Activated T-helper 1 cell treated with anti-CD3 and anti-CD28 coated beads, Interleukin-12 subunit alpha, Interleukin-12 subunit beta, Interleukin-2, Interleukin-4 antibody, amounts not matched to agents 30 ng/mL and 10 ng/mL and 1 ng/mL, durations not matched to agents 14 hours and 24 hours and 36 hours (primary cell): ENCODE measurements at regions of chr19 and their contacts with region 1.

Region 1: DNA sequence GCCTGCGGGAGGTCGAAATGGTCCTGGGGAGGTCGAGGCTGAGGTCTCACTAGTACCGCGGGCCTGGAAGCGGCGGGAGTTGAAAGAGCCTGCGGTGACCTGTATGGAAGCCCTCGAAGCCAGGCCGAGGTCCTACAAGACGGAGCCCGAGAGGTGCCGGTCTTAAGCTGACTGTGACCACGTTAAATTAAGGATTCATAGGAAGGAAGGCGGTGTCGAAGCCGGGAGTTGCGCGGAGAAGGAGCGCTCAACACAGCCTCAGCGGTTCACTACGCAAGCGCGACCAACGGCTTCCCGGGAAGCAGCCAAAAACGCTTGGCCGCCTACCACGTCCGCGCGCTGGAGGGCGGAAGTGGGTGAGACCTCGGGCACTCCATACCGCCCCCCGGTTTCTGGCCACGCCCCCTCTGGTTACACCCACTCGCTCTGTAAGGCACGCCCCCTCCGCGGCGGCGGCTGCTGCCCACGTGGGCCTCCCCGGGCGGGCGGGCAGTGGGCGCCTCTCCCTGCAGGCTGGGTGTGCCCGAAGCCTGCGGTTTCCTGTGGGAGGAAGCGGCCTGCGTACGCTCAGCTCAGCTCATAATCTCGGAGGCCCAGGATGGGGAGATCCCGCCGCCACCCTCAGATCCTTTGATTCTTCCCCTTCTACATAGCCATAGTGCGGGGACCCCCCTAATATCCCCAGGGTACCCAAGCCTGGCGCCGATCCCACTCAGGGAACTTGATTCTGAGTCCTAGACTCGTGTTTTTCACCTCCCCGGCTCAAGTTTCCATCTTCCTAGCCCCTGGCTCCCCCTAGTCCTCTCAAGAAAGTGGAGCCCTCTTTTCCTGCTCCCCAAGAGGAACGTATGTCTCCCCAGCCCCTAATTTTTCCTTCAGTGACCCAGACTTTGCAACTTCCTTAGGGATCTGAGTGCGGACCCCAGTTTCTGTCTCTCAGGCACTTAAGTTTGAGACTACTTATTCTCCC is 3.4 kb upstream of the EMP3 start:
- DNase-seq: peak; percentile 100
- H3K4me3 Mint-ChIP-seq: peak overlapping the region; percentile 87
- H3K27ac Mint-ChIP-seq: peak overlapping the region; percentile 98
- H3K4me1 Mint-ChIP-seq: peaks cover 70% of the 10 kb centered on the region
- H3K27me3 Mint-ChIP-seq: peaks cover 2% of the 10 kb centered on the region

Region 2: DNA sequence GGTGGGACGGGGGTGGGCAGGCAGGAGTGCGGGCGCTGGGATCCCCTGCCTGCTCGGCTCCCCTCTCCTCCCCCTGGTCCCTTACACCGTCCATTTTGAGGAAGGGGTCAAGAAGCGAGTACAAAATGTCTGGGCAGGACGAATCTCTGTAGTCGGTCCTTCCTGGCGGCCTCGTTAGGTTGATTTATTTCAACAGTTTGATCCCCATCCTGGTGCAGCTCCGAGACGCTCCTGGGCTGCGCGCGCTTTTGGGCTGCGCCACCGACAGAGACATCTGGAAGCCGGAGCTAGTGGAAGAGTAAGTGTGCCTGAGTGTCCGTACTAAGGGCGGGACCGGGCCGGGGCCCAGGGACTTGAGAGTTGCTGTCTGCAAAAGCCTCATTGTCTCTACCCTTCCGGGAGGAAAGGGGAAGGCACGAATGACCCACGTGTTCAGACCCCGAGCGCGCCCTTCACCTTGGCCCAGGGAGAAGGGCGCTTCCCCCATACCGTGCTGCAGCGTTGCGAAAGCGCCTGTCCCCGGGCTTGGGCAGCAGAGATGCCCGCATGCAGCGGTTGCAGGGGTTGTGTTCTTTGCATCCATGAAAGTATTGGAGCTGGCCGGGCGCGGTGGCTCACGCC is 50.3 kb before region 1 on chr19:
- intact Hi-C with region 1: loop called (anchors 2 kb)
- DNase-seq: no peak
- H3K4me3 Mint-ChIP-seq: peak overlapping the region; percentile 81
- H3K27ac Mint-ChIP-seq: peak overlapping the region; percentile 23
- H3K4me1 Mint-ChIP-seq: peaks cover 13% of the 10 kb centered on the region
- H3K27me3 Mint-ChIP-seq: peaks cover 21% of the 10 kb centered on the region

Region 3: DNA sequence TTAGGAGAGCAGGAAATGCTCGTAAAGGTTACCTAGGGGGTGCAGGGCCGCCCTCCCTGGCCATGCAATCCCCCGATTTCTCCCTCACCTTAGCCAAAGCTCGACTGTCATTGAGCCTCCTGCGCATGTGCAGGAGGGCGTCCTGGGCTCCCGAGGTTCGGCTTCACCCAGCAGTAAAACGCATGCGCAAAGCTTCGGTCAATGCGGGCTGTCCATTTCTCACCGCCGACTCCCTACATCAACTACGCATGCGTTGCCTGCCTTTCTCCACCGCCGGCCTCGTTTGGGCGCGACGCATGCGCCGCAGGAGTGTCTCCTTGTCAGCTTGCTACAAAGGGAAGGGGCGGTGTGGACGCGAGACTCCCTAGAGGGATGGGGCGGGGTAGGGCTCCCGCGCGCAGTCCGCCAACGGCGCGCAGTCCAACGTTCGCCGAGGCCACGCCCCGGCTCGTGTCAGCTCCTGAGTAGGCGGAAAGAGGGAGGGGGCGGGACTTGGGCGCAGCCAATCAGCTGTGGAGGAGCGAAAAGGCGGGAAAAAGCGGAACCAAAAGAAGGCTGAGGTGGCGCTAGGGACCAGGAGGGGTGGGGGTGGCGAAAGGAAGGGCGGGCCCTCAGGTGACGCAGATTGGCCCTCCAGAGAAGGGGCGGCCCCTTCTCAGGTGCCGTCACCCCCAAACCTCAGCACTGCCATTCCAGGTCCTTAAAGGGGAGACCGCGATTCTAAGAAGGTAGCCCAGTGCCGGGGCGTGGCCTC is 42.1 kb after region 1 on chr19 and contains the starts of genes SYNGR4 and TMEM143:
- intact Hi-C with region 1: loop called (anchors 1 kb)
- DNase-seq: peak; percentile 98
- H3K4me3 Mint-ChIP-seq: peak within 1 kb of the TSS; percentile 85
- H3K27ac Mint-ChIP-seq: peak within 1 kb of the TSS; percentile 87
- H3K4me1 Mint-ChIP-seq: peaks cover 6% of the 10 kb centered on the region
- H3K27me3 Mint-ChIP-seq: no peaks in the 10 kb centered on the region
- total RNA-seq, gene SYNGR4: 0.61 TPM in 1 of 2 replicates, not detected in the other
- total RNA-seq, gene TMEM143: 7.7 and 14.9 TPM in 2 replicates

Region 4: GRCh38 chr19:48445606-48446481 is 123.9 kb after region 1 on chr19 and contains the start of gene GRWD1:
- intact Hi-C with region 1: loop called (anchors 1 kb)
- DNase-seq: peak; percentile 92
- H3K4me3 Mint-ChIP-seq: peak within 1 kb of the TSS; percentile 92
- H3K27ac Mint-ChIP-seq: peak within 1 kb of the TSS; percentile 90
- H3K4me1 Mint-ChIP-seq: peaks cover 19% of the 10 kb centered on the region
- H3K27me3 Mint-ChIP-seq: peaks cover 25% of the 10 kb centered on the region
- total RNA-seq, gene GRWD1: 96.0 and 100 TPM in 2 replicates

Region 5: GRCh38 chr19:48637170-48637947 is 315.5 kb after region 1 on chr19 and contains the start of gene DBP:
- intact Hi-C with region 1: loop called (anchors 5 kb)
- DNase-seq: peak; percentile 98
- H3K4me3 Mint-ChIP-seq: peak within 1 kb of the TSS; percentile 97
- H3K27ac Mint-ChIP-seq: peak within 1 kb of the TSS; percentile 100
- H3K4me1 Mint-ChIP-seq: peaks cover 29% of the 10 kb centered on the region
- H3K27me3 Mint-ChIP-seq: peaks cover 4% of the 10 kb centered on the region
- total RNA-seq, gene DBP: 8.5 and 9.1 TPM in 2 replicates